Head of caudate nucleus (tissue), 42 donors: ENCODE measurements at regions of chr17 and their contacts with region 1.

Region 1: DNA sequence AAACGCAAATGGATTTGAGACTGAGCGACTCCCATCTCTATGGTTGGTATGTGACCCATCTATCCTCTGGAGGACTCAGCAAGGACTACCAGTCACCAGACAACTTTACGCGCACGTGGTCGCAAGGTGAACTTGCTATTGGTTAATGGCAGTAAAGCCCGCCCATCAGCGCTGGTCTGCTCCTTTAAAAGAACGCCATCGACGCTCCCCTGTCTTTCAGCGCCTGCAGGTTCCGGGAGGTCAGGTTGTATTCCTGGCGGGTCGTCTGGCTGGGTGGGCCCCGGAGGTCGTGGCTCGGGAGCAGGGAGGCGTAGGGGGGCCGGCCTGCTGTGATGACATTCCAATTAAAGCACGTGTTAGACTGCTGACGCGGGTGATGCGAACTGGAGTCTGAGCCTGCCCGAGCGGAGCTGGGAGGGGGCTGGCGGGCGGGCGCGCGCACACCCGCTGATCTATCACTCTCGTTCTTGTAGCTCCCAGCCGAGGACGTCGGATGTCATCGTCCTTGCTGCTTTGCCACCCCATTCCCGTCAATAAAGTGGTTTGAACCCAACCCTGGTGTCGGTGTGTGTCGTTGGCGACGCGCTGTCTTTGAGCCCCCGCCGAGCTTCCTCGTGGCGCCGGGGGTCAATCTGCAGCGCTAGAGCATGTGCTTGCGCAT is 15.9 kb upstream of the ERN1 start:
- DNase-seq: peak; percentile 95 to 100 (median 99)

Region 2: GRCh38 chr17:64202675-64203344 is 56.9 kb after region 1 on chr17:
- intact Hi-C with region 1: loop called (anchors 5 kb)
- DNase-seq: peak; percentile 45 to 91 (median 78)

Region 3: DNA sequence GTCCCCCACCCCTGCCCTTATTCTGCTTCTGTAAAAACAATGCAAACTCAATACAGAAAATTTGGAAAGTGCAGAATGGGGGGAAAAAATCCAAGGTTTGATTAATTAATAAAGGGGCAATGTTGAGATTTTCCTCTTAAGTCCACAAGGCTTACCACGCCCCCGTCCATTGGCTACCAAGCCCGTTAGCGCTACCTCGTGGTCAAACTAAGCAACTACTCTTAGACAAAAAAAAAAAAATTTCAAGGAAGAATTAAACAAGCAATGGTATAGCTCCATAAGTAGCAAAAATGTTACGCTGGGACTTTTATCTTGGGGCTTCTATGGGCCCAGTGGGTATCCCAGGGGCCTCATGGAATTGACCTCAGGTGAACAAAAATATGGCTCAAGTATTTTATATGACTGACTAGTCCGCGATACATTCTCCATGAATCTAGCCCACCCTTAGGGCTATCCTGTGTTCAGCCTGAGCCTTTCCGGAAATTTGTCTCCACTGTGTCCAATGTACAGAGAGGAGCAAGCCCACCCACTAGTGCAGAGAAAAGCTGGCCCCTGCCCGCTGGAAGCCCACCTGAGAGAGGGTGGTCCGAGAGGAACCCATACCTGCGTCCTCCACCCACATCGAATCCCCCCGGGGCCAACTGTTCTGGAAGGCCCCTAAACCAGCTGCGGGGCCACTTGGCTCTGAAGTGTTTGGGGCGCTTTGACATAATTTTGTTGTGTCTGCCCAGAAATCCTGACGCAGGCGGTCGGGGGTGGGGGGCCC is 136.3 kb after region 1 on chr17:
- intact Hi-C with region 1: loop called (anchors 5 kb)
- DNase-seq: peak; percentile 10 to 84 (median 55)